CD8-positive, alpha-beta T cell (primary cell): ENCODE measurements at regions of chr5 and their contacts with region 1.

Region 1: GRCh38 chr5:112860929-112861637 is at the start of gene SRP19:
- DNase-seq: peak; percentile 82 to 97 (median 91)
- ATAC-seq: peak; percentile 92
- H3K4me3 ChIP-seq: peak within 1 kb of the TSS; percentile 64 to 99
- H3K4me3 Mint-ChIP-seq: peak within 1 kb of the TSS; percentile 97
- H3K27ac ChIP-seq: peak within 1 kb of the TSS; percentile 82 to 93
- H3K27ac Mint-ChIP-seq: peak within 1 kb of the TSS; percentile 99
- H3K4me1 ChIP-seq: peaks cover 35% of the 10 kb centered on the region
- H3K4me1 Mint-ChIP-seq: peaks cover 43% of the 10 kb centered on the region
- H3K27me3 ChIP-seq: no peaks in the 10 kb centered on the region
- H3K27me3 Mint-ChIP-seq: peaks cover 8% of the 10 kb centered on the region
- CTCF ChIP-seq: no peak
- total RNA-seq, gene SRP19: 50.0 to 52.0 TPM

Region 2: DNA sequence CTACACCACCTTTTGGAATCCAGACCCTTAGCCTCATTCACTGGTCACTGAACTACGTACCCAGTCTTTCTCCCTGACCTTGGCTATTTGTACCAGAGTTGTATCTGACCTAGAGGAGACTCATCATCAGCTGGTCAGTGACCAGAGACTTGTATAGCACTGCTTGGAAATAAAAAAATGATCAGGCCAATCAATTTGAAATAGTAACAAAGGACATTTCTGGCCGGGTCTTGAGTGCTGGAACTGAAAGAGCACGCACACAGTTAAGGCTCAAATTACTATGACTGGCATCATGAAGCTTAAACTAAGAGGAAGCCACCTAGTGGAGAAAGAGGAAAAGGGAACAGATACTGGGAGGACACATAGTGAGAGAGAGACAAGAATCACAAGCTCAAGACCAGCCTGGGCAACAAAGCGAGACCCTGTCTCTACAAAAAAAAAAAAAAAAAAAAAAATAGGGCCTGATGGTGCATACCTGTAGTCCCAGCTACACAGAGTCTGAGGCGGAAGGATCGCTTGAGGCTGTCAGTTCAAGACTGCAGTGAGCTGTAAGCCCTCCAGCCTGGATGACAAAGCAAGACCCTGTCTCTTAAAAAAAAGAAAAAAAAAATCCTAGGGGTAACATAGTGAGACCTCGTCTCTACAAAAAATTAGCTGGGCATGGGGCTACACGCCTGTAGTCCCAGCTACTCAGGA is 12.8 kb before region 1 on chr5:
- CTCF ChIA-PET with region 1: interaction called, 11 read pairs
- POLR2A ChIA-PET with region 1: no interaction called
- intact Hi-C with region 1: no loop called
- DNase-seq: peak in 3 of 9 experiments; percentile 11 to 68 (median 58)
- ATAC-seq: peak; percentile 99
- H3K4me3 ChIP-seq: no peak overlapping the region
- H3K4me3 Mint-ChIP-seq: no peak overlapping the region
- H3K27ac ChIP-seq: no peak overlapping the region
- H3K27ac Mint-ChIP-seq: peak overlapping the region; percentile 21
- H3K4me1 ChIP-seq: no peaks in the 10 kb centered on the region
- H3K4me1 Mint-ChIP-seq: peaks cover 4% of the 10 kb centered on the region
- H3K27me3 ChIP-seq: no peaks in the 10 kb centered on the region
- H3K27me3 Mint-ChIP-seq: peaks cover 7% of the 10 kb centered on the region
- CTCF ChIP-seq: peak; percentile 80

Region 3: DNA sequence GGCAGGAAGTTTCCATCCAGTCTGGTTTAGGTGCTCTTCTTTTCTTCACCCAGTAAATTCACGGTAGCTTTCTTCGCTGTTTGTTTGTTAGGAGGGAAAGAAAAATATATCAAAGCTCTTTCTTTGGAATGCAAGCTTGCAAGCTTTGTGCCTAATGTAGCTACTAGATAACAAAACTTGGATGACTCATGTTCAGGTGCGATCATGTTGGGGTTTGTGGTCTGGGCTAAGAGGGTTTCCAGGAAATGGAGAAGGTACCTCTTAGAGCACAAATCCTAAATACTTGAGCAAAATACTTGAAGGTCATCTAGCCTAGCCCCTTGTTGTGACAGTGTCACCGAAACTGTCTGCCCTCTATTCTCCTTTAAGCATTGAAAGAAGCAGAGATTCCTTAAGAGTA is 17.7 kb after region 1 on chr5:
- CTCF ChIA-PET with region 1: interaction called, 3 read pairs
- POLR2A ChIA-PET with region 1: interaction called, 3 read pairs
- intact Hi-C with region 1: loop called in 1 of 2 experiments (anchors 1 kb)
- DNase-seq: peak in 7 of 9 experiments; percentile 26 to 69 (median 52)
- ATAC-seq: peak; percentile 90
- H3K4me3 ChIP-seq: no peak overlapping the region
- H3K4me3 Mint-ChIP-seq: peak overlapping the region; percentile 19
- H3K27ac ChIP-seq: peak overlapping the region in 1 of 2 experiments; percentile 51
- H3K27ac Mint-ChIP-seq: peak overlapping the region; percentile 69
- H3K4me1 ChIP-seq: peaks cover 16% of the 10 kb centered on the region
- H3K4me1 Mint-ChIP-seq: peaks cover 31% of the 10 kb centered on the region
- H3K27me3 ChIP-seq: no peaks in the 10 kb centered on the region
- H3K27me3 Mint-ChIP-seq: no peaks in the 10 kb centered on the region
- CTCF ChIP-seq: no peak

Region 4: GRCh38 chr5:112958093-112959088 is 97.3 kb after region 1 on chr5:
- CTCF ChIA-PET with region 1: no interaction called
- POLR2A ChIA-PET with region 1: interaction called, 3 read pairs
- intact Hi-C with region 1: loop called in 1 of 2 experiments (anchors 5 kb)
- DNase-seq: no peak
- ATAC-seq: no peak
- H3K4me3 ChIP-seq: no peak overlapping the region
- H3K4me3 Mint-ChIP-seq: no peak overlapping the region
- H3K27ac ChIP-seq: no peak overlapping the region
- H3K27ac Mint-ChIP-seq: no peak overlapping the region
- H3K4me1 ChIP-seq: no peaks in the 10 kb centered on the region
- H3K4me1 Mint-ChIP-seq: peaks cover 2% of the 10 kb centered on the region
- H3K27me3 ChIP-seq: no peaks in the 10 kb centered on the region
- H3K27me3 Mint-ChIP-seq: peaks cover 2% of the 10 kb centered on the region
- CTCF ChIP-seq: no peak

Region 5: GRCh38 chr5:112976432-112977309 is 115.6 kb after region 1 on chr5 and contains the start of gene DCP2:
- CTCF ChIA-PET with region 1: interaction called, 3 read pairs
- POLR2A ChIA-PET with region 1: interaction called, 11 read pairs
- intact Hi-C with region 1: loop called (anchors 1 kb)
- DNase-seq: peak; percentile 88 to 99 (median 95)
- ATAC-seq: peak; percentile 96
- H3K4me3 ChIP-seq: peak within 1 kb of the TSS; percentile 57 to 98
- H3K4me3 Mint-ChIP-seq: peak within 1 kb of the TSS; percentile 100
- H3K27ac ChIP-seq: peak within 1 kb of the TSS; percentile 81
- H3K27ac Mint-ChIP-seq: peak within 1 kb of the TSS; percentile 97
- H3K4me1 ChIP-seq: peaks cover 24% of the 10 kb centered on the region
- H3K4me1 Mint-ChIP-seq: peaks cover 43% of the 10 kb centered on the region
- H3K27me3 ChIP-seq: no peaks in the 10 kb centered on the region
- H3K27me3 Mint-ChIP-seq: no peaks in the 10 kb centered on the region
- CTCF ChIP-seq: no peak
- total RNA-seq, gene DCP2: 65.4 to 69.8 TPM

Region 6: DNA sequence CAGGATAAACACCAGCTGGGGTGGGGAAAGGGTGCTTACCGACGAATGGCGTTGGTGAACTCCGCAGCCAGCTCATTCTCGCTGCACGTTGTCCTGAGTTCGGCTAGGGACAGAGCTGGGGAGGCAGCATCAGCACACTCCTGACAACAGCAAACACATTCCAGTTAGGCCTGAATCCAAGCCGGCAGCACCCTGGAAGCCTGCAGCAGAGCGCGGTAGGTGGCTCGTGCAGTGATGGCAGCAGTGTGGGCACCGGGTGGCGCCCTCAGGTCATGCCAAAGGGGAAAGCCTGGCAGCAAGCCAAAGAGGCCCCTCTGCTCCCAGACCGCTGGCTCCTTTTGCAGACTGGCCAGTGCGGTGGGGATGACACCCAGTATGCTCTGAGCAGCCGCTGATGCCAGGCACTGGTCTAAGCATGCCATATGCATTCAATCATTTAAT is 182.4 kb after region 1 on chr5:
- CTCF ChIA-PET with region 1: no interaction called
- POLR2A ChIA-PET with region 1: no interaction called
- intact Hi-C with region 1: no loop called
- DNase-seq: peak in 6 of 9 experiments; percentile 16 to 71 (median 40)
- ATAC-seq: no peak
- H3K4me3 ChIP-seq: no peak overlapping the region
- H3K4me3 Mint-ChIP-seq: no peak overlapping the region
- H3K27ac ChIP-seq: no peak overlapping the region
- H3K27ac Mint-ChIP-seq: no peak overlapping the region
- H3K4me1 ChIP-seq: no peaks in the 10 kb centered on the region
- H3K4me1 Mint-ChIP-seq: peaks cover 5% of the 10 kb centered on the region
- H3K27me3 ChIP-seq: no peaks in the 10 kb centered on the region
- H3K27me3 Mint-ChIP-seq: no peaks in the 10 kb centered on the region
- CTCF ChIP-seq: peak; percentile 24

Region 7: GRCh38 chr5:113520429-113520828 is 659.3 kb after region 1 on chr5:
- CTCF ChIA-PET with region 1: no interaction called
- POLR2A ChIA-PET with region 1: no interaction called
- intact Hi-C with region 1: loop called (anchors 5 kb)
- DNase-seq: no peak
- ATAC-seq: no peak
- H3K4me3 ChIP-seq: no peak overlapping the region
- H3K4me3 Mint-ChIP-seq: no peak overlapping the region
- H3K27ac ChIP-seq: no peak overlapping the region
- H3K27ac Mint-ChIP-seq: no peak overlapping the region
- H3K4me1 ChIP-seq: peaks cover 26% of the 10 kb centered on the region
- H3K4me1 Mint-ChIP-seq: peaks cover 64% of the 10 kb centered on the region
- H3K27me3 ChIP-seq: no peaks in the 10 kb centered on the region
- H3K27me3 Mint-ChIP-seq: no peaks in the 10 kb centered on the region
- CTCF ChIP-seq: no peak